ENCODE measurements at regions of chr14 and their contacts with region 1.

Region 1: GRCh38 chr14:50003213-50004031 is 110.5 kb downstream of the ARF6 start:
- DNase-seq: peak; percentile 95
- H3K4me3 Mint-ChIP-seq: peak overlapping the region; percentile 83
- H3K27ac Mint-ChIP-seq: peak overlapping the region; percentile 96
- H3K4me1 Mint-ChIP-seq: peaks cover 58% of the 10 kb centered on the region
- H3K27me3 Mint-ChIP-seq: no peaks in the 10 kb centered on the region

Region 2: GRCh38 chr14:49892636-49893308 is 110.7 kb before region 1 on chr14 and contains the start of gene ARF6:
- intact Hi-C with region 1: loop called (anchors 1 kb)
- DNase-seq: peak; percentile 99
- H3K4me3 Mint-ChIP-seq: peak within 1 kb of the TSS; percentile 96
- H3K27ac Mint-ChIP-seq: peak within 1 kb of the TSS; percentile 100
- H3K4me1 Mint-ChIP-seq: peaks cover 21% of the 10 kb centered on the region
- H3K27me3 Mint-ChIP-seq: no peaks in the 10 kb centered on the region
- total RNA-seq, gene ARF6: 154 and 160 TPM in 2 replicates

Region 3: DNA sequence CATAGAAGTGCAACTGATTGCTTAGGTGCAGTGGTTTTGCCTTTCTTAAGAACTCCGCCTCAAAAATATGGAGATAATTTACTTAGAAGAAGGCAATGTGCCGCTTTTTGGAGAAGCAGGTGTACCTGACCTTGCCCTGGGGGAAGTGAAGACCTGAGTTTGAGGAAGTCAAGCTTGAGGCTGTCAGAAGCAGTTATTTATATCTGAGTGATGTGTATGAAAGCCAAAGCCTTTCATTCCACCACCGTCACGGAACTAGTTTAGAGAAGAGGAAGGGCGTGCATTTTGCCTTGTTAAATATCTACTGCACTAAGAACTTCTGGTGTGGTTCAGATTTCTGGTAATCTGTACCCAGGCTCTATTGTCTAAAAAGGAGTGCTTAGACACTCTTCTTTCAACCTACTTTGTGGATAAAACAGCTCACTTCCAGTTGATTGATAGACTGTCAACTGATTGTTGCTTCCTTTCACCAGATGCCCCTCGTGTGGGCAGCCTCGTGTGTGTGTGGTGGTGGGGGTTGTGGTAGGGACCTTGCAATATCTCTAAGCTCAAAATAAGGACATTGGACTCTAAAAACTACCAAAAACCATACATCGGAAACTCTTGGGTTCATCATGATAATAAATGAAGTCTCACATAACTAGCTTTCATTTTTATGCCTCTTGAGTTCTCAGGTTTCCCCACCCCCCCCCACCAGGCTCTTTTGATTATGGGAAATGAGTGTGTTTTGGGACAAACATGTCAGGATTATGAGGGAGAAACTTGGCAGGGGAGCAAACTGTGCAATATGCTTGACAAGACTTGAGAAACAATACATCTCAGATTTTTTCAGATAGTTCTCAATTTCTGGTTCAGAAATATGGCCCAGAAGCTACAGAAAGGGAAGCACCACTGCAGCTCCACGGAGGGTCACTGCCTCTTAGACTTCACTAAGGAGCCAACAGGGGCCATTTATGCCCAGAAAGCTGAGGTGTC is 32.0 kb before region 1 on chr14:
- intact Hi-C with region 1: loop called (anchors 1 kb)
- DNase-seq: peak; percentile 88
- H3K4me3 Mint-ChIP-seq: peak overlapping the region; percentile 82
- H3K27ac Mint-ChIP-seq: peak overlapping the region; percentile 99
- H3K4me1 Mint-ChIP-seq: peaks cover 58% of the 10 kb centered on the region
- H3K27me3 Mint-ChIP-seq: no peaks in the 10 kb centered on the region

Region 4: GRCh38 chr14:50038398-50039119 is 35.1 kb after region 1 on chr14:
- intact Hi-C with region 1: loop called (anchors 1 kb)
- DNase-seq: peak; percentile 87
- H3K4me3 Mint-ChIP-seq: peak overlapping the region; percentile 81
- H3K27ac Mint-ChIP-seq: peak overlapping the region; percentile 98
- H3K4me1 Mint-ChIP-seq: peaks cover 58% of the 10 kb centered on the region
- H3K27me3 Mint-ChIP-seq: no peaks in the 10 kb centered on the region

Region 5: GRCh38 chr14:50109342-50109741 is 105.9 kb after region 1 on chr14:
- intact Hi-C with region 1: loop called (anchors 1 kb)
- DNase-seq: no peak
- H3K4me3 Mint-ChIP-seq: no peak overlapping the region
- H3K27ac Mint-ChIP-seq: no peak overlapping the region
- H3K4me1 Mint-ChIP-seq: peaks cover 20% of the 10 kb centered on the region
- H3K27me3 Mint-ChIP-seq: no peaks in the 10 kb centered on the region

Measured in activated CD4-positive, alpha-beta T cell treated with anti-CD3 and anti-CD28 coated beads, Interleukin-2, amount 10 ng/mL, durations not matched to agents 24 days and 14 days (primary cell).